ENCODE measurements at regions of chr11 and their contacts with region 1.

Region 1: DNA sequence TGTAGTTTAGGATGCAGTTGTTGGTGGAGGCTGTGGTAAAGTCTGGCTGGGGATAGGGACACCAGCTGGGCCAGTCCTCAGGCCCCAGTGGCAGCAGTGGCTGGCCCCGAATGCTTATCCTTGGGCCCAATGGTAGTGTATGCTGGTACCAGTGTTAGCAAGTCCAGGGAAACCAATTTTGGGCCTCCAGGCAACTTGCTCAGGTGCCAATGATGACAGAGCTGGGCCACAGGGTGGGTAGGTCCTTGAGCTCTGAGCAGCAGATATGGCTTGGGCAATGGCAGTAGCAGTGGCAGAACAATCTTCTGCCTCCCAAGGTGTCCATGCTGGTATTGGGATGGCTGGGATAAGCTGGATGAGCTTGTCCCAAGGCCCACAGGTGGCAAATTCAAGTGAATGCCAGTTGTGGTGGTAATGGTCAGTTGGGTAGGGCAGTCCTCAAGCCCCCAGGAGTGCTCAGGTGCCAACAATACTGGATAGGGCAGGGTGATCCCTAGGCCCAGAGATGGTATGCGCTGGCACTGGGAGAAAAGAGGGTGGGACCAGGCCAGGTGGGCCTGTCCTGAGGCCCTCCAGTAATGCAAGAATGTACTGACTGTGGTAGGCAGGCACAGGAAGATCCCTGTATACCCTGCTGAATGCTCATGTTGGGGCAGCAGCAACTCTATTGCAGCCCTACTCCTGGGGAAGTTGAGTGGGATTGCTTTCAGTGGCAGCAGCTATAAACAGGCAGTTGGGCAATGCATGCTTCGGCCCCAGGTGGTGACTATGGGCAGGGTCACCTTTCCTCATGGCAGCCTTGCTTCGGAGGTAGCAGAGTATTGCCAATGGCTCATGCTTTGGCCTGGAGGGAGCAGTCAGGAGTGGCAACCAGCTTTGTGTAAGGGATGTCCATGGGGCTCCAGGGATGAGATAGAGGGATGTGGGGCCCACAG is 54.7 kb downstream of the KCNQ1OT1 start:
- DNase-seq: no peak
- ATAC-seq: no peak
- H3K4me3 ChIP-seq: no peak overlapping the region
- H3K27ac ChIP-seq: no peak overlapping the region
- H3K4me1 ChIP-seq: no peaks in the 10 kb centered on the region
- H3K27me3 ChIP-seq: no peaks in the 10 kb centered on the region
- CTCF ChIP-seq: no peak
- POLR2A ChIP-seq: no peak
- RAD21 ChIP-seq: no peak

Region 2: GRCh38 chr11:2002807-2003206 is 642.3 kb before region 1 on chr11:
- CTCF ChIA-PET with region 1: no interaction called
- POLR2A ChIA-PET with region 1: no interaction called
- RAD21 ChIA-PET with region 1: no interaction called
- intact Hi-C with region 1: no loop called
- DNase-seq: no peak
- ATAC-seq: no peak
- H3K4me3 ChIP-seq: no peak overlapping the region
- H3K27ac ChIP-seq: no peak overlapping the region
- H3K4me1 ChIP-seq: no peaks in the 10 kb centered on the region
- H3K27me3 ChIP-seq: no peaks in the 10 kb centered on the region
- CTCF ChIP-seq: no peak
- POLR2A ChIP-seq: no peak
- RAD21 ChIP-seq: no peak

Region 3: DNA sequence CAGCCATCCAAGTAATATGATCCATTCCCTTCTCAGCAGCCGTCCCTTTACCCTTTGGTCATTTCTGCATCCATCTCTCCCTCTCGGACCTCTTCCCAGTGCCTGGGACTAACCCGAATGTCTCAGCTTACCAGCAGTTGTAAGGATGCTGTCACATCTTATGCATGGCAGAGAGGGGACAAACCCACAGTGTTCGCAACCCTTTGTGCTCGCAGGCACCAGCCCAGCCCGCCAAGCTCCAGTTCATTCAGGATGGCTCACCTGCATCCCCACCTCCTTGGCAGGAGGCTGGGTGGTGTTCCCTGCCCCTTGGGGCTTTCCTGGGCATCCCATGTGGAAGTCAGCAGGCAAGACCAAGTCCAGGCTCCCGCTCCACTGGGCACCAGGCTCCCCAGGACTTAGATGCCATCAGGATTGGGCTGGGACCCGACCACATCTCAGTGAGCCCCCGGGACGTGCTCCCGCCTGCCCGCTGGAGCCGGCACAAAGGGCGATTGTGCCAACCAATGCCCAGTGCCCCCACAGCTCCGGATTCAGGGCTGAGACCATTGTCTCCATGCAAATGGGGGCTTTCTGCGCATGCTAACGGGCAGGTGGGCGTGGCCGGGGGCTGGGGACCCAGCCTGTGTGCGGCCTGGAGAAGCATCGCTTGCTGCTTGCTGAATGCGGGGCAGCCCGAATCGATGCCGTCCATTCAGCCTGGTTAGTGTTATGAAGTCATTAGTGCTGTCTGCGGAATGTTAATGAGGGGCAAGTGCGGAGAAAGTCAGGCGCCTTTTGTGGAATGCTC is 54.0 kb before region 1 on chr11:
- CTCF ChIA-PET with region 1: no interaction called
- POLR2A ChIA-PET with region 1: no interaction called
- RAD21 ChIA-PET with region 1: no interaction called
- intact Hi-C with region 1: loop called (anchors 5 kb)
- DNase-seq: no peak
- ATAC-seq: no peak
- H3K4me3 ChIP-seq: no peak overlapping the region
- H3K27ac ChIP-seq: no peak overlapping the region
- H3K4me1 ChIP-seq: no peaks in the 10 kb centered on the region
- H3K27me3 ChIP-seq: no peaks in the 10 kb centered on the region
- CTCF ChIP-seq: no peak
- POLR2A ChIP-seq: no peak
- RAD21 ChIP-seq: no peak

Region 4: DNA sequence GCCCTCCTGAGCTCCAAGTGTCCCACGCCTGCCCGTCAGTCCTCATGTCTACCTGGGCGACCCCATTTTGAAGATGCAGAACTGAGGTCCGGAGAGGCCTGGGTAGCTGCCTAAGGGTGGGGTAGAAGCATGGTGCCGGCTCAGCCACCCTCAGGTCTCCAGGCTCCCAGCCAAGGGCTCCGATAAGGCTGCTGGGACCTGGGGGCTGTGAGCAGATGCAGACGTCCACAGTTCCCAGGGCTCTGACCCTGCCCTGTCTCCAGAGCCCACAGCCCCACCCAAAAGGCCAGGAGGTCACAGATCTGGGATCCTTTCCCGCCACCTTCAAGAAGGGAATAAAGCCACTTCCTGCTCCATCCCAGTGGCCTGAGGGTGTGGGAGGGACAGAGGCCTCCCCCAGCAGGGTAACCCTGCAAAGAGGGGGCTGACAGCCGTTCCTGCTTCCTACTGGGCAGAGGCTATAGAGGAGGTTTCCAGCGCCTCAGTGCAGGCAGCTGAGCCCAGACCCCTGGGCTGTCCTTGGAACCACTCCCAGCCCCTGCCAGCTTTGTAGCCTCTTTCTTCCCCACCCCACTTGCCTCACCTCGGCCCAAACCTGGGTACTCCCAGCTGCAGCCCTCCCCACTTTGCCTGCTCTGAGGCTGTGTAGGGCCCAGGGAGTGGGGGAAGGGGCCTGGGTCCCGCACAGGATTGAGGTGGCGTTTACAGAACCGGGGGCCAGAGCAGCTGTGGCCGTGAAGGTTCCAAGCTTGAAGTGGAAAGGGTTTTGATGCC is 155.0 kb after region 1 on chr11:
- CTCF ChIA-PET with region 1: no interaction called
- POLR2A ChIA-PET with region 1: no interaction called
- RAD21 ChIA-PET with region 1: no interaction called
- intact Hi-C with region 1: no loop called
- DNase-seq: no peak
- ATAC-seq: no peak
- H3K4me3 ChIP-seq: no peak overlapping the region
- H3K27ac ChIP-seq: no peak overlapping the region
- H3K4me1 ChIP-seq: no peaks in the 10 kb centered on the region
- H3K27me3 ChIP-seq: no peaks in the 10 kb centered on the region
- CTCF ChIP-seq: no peak
- POLR2A ChIP-seq: no peak
- RAD21 ChIP-seq: no peak

Measured in HCT116 (cell line).